Calu3 (cell line): ENCODE measurements at regions of chr9 and their contacts with region 1.

Region 1: GRCh38 chr9:105637787-105638395 is 24.4 kb upstream of the TAL2 start:
- DNase-seq: no peak
- H3K4me3 Mint-ChIP-seq: no peak overlapping the region
- H3K27ac Mint-ChIP-seq: no peak overlapping the region
- H3K4me1 Mint-ChIP-seq: no peaks in the 10 kb centered on the region
- H3K27me3 Mint-ChIP-seq: no peaks in the 10 kb centered on the region
- CTCF ChIP-seq: no peak

Region 2: DNA sequence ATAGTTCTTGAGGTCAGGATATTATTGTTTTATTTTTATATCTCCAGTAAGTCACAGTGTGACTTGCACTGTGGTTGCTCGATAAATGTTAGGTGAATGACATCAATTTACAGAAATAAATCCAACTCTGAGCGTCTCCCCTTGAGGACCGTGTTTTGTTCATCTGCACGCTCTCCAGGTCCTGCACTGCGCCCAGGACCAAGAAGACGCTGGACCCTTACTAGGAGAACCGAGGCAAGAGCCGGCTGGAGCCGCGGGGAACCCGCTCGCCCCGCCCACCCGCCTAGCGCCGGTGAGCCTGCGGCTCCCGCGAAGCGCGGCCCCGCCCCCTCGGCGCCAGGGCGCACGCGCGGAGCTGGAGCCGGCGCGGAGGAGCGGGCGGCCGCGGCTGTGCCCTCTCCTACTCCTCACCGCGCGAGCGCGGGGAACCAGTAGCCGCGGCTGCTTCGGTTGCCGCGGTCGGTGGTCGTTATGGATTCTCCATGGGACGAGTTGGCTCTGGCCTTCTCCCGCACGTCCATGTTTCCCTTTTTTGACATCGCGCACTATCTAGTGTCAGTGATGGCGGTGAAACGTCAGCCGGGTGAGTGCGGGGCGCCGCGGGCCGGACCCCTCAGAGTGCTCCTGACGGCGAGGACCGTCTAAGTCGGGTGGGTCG is 56.4 kb after region 1 on chr9 and contains the start of gene TMEM38B:
- CTCF ChIA-PET with region 1: no interaction called
- intact Hi-C with region 1: loop called (anchors 10 kb)
- DNase-seq: peak; percentile 80
- H3K4me3 Mint-ChIP-seq: peak within 1 kb of the TSS; percentile 63
- H3K27ac Mint-ChIP-seq: peak within 1 kb of the TSS; percentile 60
- H3K4me1 Mint-ChIP-seq: peaks cover 12% of the 10 kb centered on the region
- H3K27me3 Mint-ChIP-seq: no peaks in the 10 kb centered on the region
- CTCF ChIP-seq: no peak
- total RNA-seq, gene TMEM38B: 14.5 and 15.4 TPM in 2 replicates